GM12878 (cell line): ENCODE measurements at regions of chr13 and their contacts with region 1.

Region 1: DNA sequence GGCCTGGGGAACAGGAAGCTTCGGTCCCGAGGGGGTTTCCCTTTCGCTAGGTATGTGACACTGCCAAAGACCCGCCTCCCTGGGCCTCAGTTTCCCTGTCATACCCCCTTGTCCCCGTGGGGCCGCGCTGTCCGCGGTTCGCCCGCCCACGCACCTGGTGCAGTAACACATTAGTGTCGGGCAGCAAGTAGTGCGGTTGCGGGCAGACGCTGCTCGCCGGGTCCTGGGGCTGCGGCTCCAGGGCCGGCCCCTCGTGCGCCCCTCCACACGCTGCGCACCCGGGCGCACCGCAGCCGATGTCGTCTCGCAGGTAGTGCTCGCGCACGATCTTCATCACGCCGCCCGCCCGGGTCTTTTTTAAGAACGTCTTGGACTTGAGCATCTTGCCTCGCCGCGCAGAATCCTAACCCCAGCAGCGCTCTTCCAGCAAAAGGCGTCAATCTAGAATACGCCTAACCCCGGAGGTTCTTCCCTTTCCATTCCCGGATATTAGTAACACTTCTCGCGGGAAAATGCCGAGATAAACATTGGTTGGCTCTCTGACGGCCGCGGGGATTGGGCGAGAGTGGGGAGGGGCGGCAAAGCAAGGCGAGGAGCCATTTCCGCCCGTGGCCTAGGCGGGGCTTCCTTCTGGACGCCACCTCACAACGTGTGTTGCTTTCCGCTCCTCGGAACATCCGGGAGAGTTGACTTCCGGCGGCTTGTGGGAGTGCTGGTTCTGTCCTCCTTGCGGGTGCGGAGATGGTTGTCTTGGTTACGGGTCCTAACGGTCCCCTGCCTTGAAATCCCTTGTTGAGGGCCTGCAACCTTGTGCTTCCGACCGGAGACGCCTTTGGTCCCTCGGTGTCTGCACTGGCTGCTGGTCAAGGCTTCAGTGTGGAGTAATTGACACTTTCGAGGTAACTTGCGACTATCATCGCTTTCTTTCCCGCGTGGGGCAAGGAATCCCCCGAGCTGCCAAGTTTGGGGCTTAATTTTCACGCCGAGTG is at the starts of genes DIS3 and PIBF1:
- DNase-seq: peak; percentile 93
- ATAC-seq: peak; percentile 96
- H3K4me3 ChIP-seq: peak within 1 kb of the TSS; percentile 92
- H3K27ac ChIP-seq: peak within 1 kb of the TSS; percentile 88
- H3K4me1 ChIP-seq: no peaks in the 10 kb centered on the region
- H3K27me3 ChIP-seq: no peaks in the 10 kb centered on the region
- CTCF ChIP-seq: peak in 1 of 3 experiments; percentile 30; a peak in 1 of 6 replicates
- EP300 ChIP-seq: no peak
- POLR2A ChIP-seq: peak; percentile 88
- RAD21 ChIP-seq: no peak
- polyA plus RNA-seq, gene DIS3: 10.8 to 13.6 TPM
- polyA plus RNA-seq, gene PIBF1: 6.4 to 7.7 TPM

Region 2: GRCh38 chr13:72727417-72728289 is 54.1 kb before region 1 on chr13 and contains the starts of genes BORA and MZT1:
- CTCF ChIA-PET with region 1: interaction called, 4 read pairs
- POLR2A ChIA-PET with region 1: interaction called, 8 read pairs
- RAD21 ChIA-PET with region 1: interaction called, 4 read pairs
- SMC1A ChIA-PET with region 1: interaction called, 6 read pairs
- in situ Hi-C with region 1: no loop called
- intact Hi-C with region 1: loop called (anchors 2 kb)
- DNase-seq: peak; percentile 98
- ATAC-seq: peak; percentile 96
- H3K4me3 ChIP-seq: peak within 1 kb of the TSS; percentile 91
- H3K27ac ChIP-seq: peak within 1 kb of the TSS; percentile 89
- H3K4me1 ChIP-seq: peaks cover 12% of the 10 kb centered on the region
- H3K27me3 ChIP-seq: no peaks in the 10 kb centered on the region
- CTCF ChIP-seq: no peak
- EP300 ChIP-seq: no peak
- POLR2A ChIP-seq: peak; percentile 84
- RAD21 ChIP-seq: no peak
- polyA plus RNA-seq, gene BORA: 15.1 to 17.8 TPM
- polyA plus RNA-seq, gene MZT1: 29.2 to 31.8 TPM

Region 3: DNA sequence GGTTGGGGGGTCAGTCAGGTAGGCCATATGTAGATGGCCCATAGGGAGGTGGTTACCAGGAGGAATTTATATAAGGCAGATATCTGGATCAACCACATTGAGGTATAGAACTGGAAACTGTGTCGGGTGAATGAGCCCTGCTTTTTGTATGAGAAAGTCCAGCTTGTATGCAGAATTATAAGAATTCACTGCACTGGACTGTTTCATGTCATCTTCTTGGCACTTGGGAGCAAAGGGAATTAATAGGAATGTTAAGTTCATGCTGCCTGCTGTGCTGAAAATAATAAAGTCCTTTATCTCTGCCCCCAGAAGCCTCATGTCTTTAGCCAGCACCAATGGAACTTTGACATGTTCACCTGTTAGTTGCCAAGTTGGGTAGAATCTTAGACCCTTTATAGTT is 41.7 kb before region 1 on chr13:
- CTCF ChIA-PET with region 1: interaction called, 3 read pairs
- POLR2A ChIA-PET with region 1: no interaction called
- RAD21 ChIA-PET with region 1: no interaction called
- SMC1A ChIA-PET with region 1: interaction called, 3 read pairs
- in situ Hi-C with region 1: no loop called
- intact Hi-C with region 1: loop called (anchors 5 kb)
- DNase-seq: no peak
- ATAC-seq: no peak
- H3K4me3 ChIP-seq: no peak overlapping the region
- H3K27ac ChIP-seq: no peak overlapping the region
- H3K4me1 ChIP-seq: no peaks in the 10 kb centered on the region
- H3K27me3 ChIP-seq: no peaks in the 10 kb centered on the region
- CTCF ChIP-seq: no peak
- EP300 ChIP-seq: no peak
- POLR2A ChIP-seq: no peak
- RAD21 ChIP-seq: no peak